Testis (tissue), 5 donors: ENCODE measurements at regions of chr20 and their contacts with region 1.

Region 1: DNA sequence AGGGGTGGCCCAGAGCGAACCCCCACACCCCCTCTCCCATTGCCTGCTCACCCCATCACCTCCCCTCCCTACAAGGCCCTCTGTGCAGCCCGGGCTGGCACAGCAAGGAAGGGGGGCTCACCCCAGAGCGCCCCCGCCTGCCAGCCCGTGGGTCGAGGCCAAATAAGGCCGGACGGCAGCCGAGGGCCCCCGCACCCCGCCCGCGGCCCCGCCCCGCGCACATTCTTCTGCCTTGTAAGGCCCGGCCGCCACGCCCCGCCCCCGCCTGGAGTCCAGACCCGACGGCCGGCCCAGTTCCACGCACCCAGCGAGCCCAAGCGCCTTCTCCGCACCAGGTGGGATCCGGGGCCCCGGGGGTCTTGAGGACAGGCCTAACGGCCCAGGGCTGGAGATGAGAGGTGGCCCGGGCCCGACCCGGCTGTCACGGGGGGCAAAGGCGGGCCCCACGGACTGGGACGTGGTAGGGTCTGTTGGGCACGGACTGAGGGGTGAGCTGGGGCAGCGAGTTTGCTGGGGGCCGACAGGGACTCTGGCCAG is at the start of gene MYL9:
- DNase-seq: peak; percentile 97
- H3K4me3 ChIP-seq: peak within 1 kb of the TSS; percentile 90 to 99
- H3K27ac ChIP-seq: peak within 1 kb of the TSS; percentile 99
- H3K4me1 ChIP-seq: peaks cover 56% of the 10 kb centered on the region
- H3K27me3 ChIP-seq: no peaks in the 10 kb centered on the region
- CTCF ChIP-seq: no peak
- POLR2A ChIP-seq: peak; percentile 56
- total RNA-seq, gene MYL9: 177 to 265 TPM

Region 2: GRCh38 chr20:36460648-36461599 is 80.4 kb before region 1 on chr20:
- intact Hi-C with region 1: loop called (anchors 5 kb)
- DNase-seq: peak; percentile 96
- H3K4me3 ChIP-seq: peak overlapping the region; percentile 71 to 82
- H3K27ac ChIP-seq: peak overlapping the region; percentile 36 to 85
- H3K4me1 ChIP-seq: peaks cover 36% of the 10 kb centered on the region
- H3K27me3 ChIP-seq: no peaks in the 10 kb centered on the region
- CTCF ChIP-seq: no peak
- POLR2A ChIP-seq: peak; percentile 94

Region 3: DNA sequence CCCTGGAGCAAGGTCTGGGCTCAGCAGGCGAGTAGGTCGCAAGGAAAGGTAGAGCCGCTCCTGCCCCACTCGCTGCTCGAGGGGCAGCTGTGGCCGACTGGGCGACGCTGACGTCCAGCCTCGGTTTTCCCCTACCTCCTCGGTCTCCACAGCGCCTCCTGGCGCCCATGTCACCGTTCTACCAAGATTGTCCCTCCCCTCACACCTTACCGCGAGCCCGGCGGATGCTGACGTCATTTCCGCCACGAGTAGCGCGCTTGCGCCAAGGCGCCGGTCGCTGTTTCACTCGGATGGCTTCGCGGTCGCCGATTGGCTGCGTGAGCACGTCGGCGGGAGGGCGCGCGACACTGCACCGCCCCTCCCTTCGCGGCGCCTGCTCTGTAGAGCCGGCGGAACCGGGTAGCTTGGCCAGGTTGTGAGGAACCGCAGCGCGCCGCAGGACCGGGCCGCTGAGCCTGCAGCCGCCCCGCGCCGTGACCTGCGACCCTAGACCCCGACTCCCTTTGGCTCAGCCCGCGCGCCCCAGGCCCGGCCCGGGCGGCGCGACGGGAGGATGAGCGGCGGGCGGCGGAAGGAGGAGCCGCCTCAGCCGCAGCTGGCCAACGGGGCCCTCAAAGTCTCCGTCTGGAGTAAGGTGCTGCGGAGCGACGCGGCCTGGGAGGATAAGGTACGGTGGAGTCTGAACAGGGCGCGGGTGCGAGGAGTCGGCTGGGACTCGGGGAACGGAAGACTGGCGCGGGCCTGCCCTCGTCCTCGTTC is 64.3 kb after region 1 on chr20 and contains the start of gene RAB5IF:
- intact Hi-C with region 1: loop called (anchors 10 kb)
- DNase-seq: peak; percentile 97
- H3K4me3 ChIP-seq: peak within 1 kb of the TSS; percentile 87 to 98
- H3K27ac ChIP-seq: peak within 1 kb of the TSS; percentile 35 to 87
- H3K4me1 ChIP-seq: peaks cover 12% of the 10 kb centered on the region
- H3K27me3 ChIP-seq: no peaks in the 10 kb centered on the region
- CTCF ChIP-seq: peak; percentile 90 to 99 (median 99)
- POLR2A ChIP-seq: no peak
- total RNA-seq, gene RAB5IF: 75.7 to 81.3 TPM

Region 4: DNA sequence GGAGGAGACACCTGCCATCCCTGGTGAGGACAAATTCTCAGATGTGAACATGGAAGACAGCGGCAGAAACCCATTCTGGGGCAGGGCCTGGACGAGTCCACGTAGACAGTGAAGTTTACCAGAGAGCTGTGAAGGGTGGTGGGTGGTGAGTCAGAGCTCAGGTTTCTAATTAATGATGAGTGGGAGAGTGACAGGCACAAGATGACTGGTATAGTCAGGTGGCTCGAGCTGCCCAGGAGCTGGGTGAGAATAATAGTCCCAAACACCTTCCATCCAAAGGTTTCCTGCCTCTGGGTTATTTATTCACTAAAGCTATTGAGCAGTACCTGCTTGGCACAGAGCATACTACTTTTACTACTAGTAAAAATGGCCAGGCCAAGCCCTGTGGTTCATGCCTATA is 340.6 kb after region 1 on chr20:
- intact Hi-C with region 1: no loop called
- DNase-seq: no peak
- H3K4me3 ChIP-seq: no peak overlapping the region
- H3K27ac ChIP-seq: no peak overlapping the region
- H3K4me1 ChIP-seq: peaks cover 3% of the 10 kb centered on the region
- H3K27me3 ChIP-seq: no peaks in the 10 kb centered on the region
- CTCF ChIP-seq: no peak
- POLR2A ChIP-seq: no peak